Activated T-helper 2 cell treated with anti-CD3 and anti-CD28 coated beads, Interferon-gamma antibody, Interleukin-2, Interleukin-4, amounts not matched to agents 10 μg/mL and 5 μg/mL and 100 μg/mL, durations not matched to agents 14 hours and 24 hours and 36 hours (primary cell): ENCODE measurements at regions of chr3 and their contacts with region 1.

Region 1: GRCh38 chr3:141311496-141312353 is 56.6 kb upstream of the ZBTB38 start:
- DNase-seq: peak; percentile 98
- H3K4me3 Mint-ChIP-seq: peak overlapping the region; percentile 99
- H3K27ac Mint-ChIP-seq: peak overlapping the region; percentile 99
- H3K4me1 Mint-ChIP-seq: peaks cover 46% of the 10 kb centered on the region
- H3K27me3 Mint-ChIP-seq: no peaks in the 10 kb centered on the region

Region 2: GRCh38 chr3:140941434-140942220 is 370.1 kb before region 1 on chr3 and contains the start of gene SLC25A36:
- intact Hi-C with region 1: loop called (anchors 1 kb)
- DNase-seq: peak; percentile 94
- H3K4me3 Mint-ChIP-seq: peak within 1 kb of the TSS; percentile 91
- H3K27ac Mint-ChIP-seq: peak within 1 kb of the TSS; percentile 96
- H3K4me1 Mint-ChIP-seq: peaks cover 34% of the 10 kb centered on the region
- H3K27me3 Mint-ChIP-seq: peaks cover 13% of the 10 kb centered on the region
- total RNA-seq, gene SLC25A36: 69.5 and 71.8 TPM in 2 replicates

Region 3: GRCh38 chr3:141084250-141084649 is 227.5 kb before region 1 on chr3:
- intact Hi-C with region 1: no loop called
- DNase-seq: no peak
- H3K4me3 Mint-ChIP-seq: no peak overlapping the region
- H3K27ac Mint-ChIP-seq: no peak overlapping the region
- H3K4me1 Mint-ChIP-seq: no peaks in the 10 kb centered on the region
- H3K27me3 Mint-ChIP-seq: peaks cover 3% of the 10 kb centered on the region

Region 4: DNA sequence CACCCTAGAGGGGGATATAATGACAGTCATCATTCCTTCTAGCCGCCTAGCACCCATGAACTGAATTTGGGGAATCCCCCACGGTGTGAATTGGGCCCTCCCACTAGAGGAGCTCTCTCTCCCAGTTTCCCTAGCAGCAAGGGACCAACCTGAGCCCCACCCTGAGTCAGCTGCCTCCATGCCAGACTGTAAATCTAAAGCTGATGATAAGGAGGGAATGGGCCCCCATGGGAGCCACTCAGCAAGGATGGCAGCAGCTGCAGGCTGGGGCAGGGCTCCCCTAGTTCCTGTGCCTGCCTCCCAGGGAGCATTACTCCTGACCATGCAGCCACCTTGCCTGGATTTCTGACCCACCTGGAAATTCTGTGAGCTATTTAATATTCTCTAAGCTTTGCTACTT is 137.1 kb before region 1 on chr3:
- intact Hi-C with region 1: no loop called
- DNase-seq: no peak
- H3K4me3 Mint-ChIP-seq: no peak overlapping the region
- H3K27ac Mint-ChIP-seq: no peak overlapping the region
- H3K4me1 Mint-ChIP-seq: no peaks in the 10 kb centered on the region
- H3K27me3 Mint-ChIP-seq: peaks cover 22% of the 10 kb centered on the region

Region 5: GRCh38 chr3:141412087-141412935 is 100.6 kb after region 1 on chr3:
- intact Hi-C with region 1: loop called (anchors 5 kb)
- DNase-seq: peak; percentile 57
- H3K4me3 Mint-ChIP-seq: peak overlapping the region; percentile 76
- H3K27ac Mint-ChIP-seq: peak overlapping the region; percentile 98
- H3K4me1 Mint-ChIP-seq: peaks cover 64% of the 10 kb centered on the region
- H3K27me3 Mint-ChIP-seq: no peaks in the 10 kb centered on the region

Region 6: DNA sequence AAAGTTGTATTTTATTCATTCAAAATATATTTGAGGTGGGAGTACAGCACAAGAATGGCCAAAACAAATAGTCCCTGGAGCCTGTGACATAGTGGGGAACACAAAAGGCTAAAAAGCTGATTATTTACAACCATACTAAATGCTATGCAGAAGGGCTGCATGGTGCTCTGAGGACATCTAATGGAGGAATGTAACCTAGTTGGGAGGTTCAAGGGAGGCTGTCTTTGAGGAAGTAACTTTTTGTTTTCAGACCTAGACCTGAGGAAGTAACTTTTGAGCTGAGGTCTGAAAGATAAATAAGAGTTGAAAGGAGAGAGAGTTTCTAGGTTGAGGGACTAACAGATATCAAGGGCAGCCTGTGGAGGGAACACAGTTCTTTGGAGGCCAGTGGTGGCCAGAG is 140.3 kb after region 1 on chr3:
- intact Hi-C with region 1: loop called (anchors 1 kb)
- DNase-seq: no peak
- H3K4me3 Mint-ChIP-seq: no peak overlapping the region
- H3K27ac Mint-ChIP-seq: no peak overlapping the region
- H3K4me1 Mint-ChIP-seq: peaks cover 16% of the 10 kb centered on the region
- H3K27me3 Mint-ChIP-seq: no peaks in the 10 kb centered on the region

Region 7: DNA sequence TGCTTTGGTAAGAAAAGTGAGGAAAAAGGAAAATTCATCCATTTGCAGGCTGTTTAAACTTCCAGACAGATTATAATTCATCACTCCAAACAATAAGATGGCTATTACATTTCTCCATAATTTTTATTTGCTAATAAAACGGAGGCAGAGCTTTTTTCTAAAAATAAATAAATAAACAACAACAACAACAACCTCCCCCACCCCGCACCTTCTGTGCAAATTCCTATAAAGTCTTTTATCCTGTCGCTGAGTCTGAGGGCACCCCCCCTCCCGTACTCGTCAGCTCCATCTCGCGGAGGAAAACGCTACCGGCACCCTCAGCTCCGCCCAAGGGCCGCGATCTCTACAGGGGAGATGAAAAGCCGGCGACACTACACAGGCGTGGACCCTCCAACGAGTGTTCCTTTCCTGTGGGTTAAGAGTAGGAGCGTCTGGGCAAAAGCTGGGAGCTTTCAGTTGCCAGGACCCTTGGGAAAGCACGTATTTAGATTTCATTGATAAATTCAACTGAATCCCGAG is 563.7 kb after region 1 on chr3:
- intact Hi-C with region 1: loop called (anchors 5 kb)
- DNase-seq: peak; percentile 80
- H3K4me3 Mint-ChIP-seq: peak overlapping the region; percentile 87
- H3K27ac Mint-ChIP-seq: peak overlapping the region; percentile 95
- H3K4me1 Mint-ChIP-seq: peaks cover 28% of the 10 kb centered on the region
- H3K27me3 Mint-ChIP-seq: no peaks in the 10 kb centered on the region